BJ (cell line): ENCODE measurements at regions of chr10 and their contacts with region 1.

Region 1: DNA sequence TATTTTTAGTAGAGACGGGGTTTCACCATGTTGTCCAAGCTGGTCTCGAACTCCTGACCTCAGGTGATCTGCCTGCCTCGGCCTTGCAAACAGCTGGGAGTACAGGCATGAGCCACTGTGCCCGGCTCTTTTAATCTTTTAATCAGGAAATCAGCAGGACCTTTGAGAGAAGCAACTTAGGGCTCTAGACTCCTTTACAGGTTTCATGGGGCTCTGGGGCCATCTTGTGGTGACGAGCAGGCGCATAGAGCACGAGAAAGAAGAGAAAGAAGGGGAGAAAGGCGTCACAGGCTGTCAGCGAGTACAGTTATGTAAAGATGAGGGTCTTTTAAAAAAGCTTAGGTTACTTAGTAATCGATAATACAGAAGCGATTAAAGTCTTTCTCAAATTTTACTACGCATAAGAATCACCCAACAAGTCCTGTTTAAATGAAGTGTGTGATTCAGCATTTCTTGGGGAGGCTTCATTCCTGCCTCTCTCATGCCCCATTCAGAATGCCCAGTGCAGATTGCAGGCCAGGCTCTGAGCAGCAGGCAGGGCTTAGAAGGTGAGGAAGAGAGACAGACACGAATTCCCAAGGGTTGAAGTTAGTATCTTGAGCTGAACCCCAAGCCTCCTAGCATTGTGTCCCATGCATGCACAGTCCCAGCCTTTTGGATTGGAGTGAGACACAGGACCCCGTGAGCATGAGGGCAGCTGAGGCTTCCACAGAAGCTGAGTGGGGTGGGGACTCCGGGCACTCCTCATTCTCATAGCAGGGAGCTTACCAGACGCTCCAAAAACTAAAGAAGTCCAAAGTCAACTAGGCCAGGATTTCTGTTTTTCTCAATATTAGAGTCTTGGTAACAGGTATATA is 23.6 kb upstream of the PFKP start:
- DNase-seq: no peak
- H3K4me3 ChIP-seq: no peak overlapping the region
- H3K27me3 ChIP-seq: 0 out of 2 replicates have a peak, but pooled peaks cover under 1% of the 10 kb centered on the region
- CTCF ChIP-seq: peak; percentile 86

Region 2: GRCh38 chr10:2700626-2701305 is 343.0 kb before region 1 on chr10:
- CTCF ChIA-PET with region 1: no interaction called
- POLR2A ChIA-PET with region 1: no interaction called
- DNase-seq: no peak
- H3K4me3 ChIP-seq: no peak overlapping the region
- H3K27me3 ChIP-seq: no peaks in the 10 kb centered on the region
- CTCF ChIP-seq: no peak

Region 3: DNA sequence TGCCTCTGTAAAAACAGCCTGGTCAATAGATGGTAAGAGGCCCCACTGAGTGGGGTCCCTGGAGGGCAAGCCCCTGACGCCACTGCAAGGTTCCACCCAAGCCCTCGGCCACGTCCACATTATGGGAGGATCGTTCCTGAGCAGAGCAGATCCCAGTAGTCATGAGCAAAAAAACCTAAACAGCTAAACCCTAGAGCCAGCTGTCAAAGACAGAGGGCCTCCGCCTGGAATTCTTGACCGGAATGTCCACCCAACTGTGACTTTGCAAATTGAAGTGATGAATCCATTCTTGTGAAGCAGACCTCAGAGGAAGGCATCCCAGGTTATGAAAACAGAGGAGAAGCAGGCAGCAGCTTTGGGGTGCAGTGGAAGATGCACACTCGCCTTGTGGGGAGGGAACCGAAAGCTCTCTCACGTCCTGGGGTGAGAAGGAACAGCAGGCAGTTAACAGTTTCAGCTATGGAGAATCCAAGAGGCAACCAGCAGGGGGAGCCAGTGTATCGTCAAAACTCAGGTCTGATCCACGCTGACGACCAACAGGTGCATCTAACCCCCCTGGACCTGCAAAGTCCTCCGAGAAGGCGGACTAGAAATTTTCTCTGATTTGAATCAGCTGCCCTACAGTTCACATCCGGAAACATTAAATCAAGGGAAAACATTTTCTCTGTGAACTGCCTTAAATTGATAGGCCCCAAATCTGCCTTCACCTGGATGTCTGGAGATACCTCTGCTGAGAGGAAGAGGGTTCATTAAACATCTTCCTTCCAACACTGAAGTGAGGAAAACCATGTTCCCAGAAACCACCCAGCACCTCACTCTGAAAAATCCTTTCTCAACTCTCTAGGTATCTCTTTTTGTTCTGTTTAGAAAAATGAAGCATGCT is 115.5 kb before region 1 on chr10:
- CTCF ChIA-PET with region 1: interaction called, 143 read pairs
- POLR2A ChIA-PET with region 1: no interaction called
- DNase-seq: no peak
- H3K4me3 ChIP-seq: no peak overlapping the region
- H3K27me3 ChIP-seq: peaks cover 12% of the 10 kb centered on the region
- CTCF ChIP-seq: peak; percentile 81

Region 4: DNA sequence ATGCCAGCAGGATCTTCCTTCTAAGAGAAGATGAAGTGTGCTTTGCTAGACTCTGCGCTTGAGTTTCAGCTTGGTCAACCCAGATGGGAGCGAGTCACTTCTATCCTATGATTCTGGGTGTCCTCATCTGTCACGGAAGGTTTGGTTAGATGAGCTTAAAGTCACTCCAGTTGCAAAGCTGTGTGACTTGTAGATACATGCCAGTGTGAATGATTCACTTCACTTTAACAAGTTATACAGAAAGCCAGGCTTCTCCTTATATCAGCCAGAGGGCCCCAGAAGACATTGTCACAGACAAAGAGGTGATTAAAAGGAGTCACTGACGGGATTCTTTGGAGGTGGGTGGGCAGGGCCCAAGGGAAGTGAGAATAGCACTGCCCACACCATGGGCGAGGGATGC is 99.0 kb before region 1 on chr10:
- CTCF ChIA-PET with region 1: interaction called, 10 read pairs
- POLR2A ChIA-PET with region 1: no interaction called
- DNase-seq: no peak
- H3K4me3 ChIP-seq: no peak overlapping the region
- H3K27me3 ChIP-seq: peaks cover 5% of the 10 kb centered on the region; the same call in 1 of the 2 replicates
- CTCF ChIP-seq: no peak

Region 5: GRCh38 chr10:3022027-3022426 is 21.7 kb before region 1 on chr10:
- CTCF ChIA-PET with region 1: interaction called, 12 read pairs
- POLR2A ChIA-PET with region 1: no interaction called
- DNase-seq: no peak
- H3K4me3 ChIP-seq: no peak overlapping the region
- H3K27me3 ChIP-seq: peaks cover 4% of the 10 kb centered on the region; the same call in 1 of the 2 replicates
- CTCF ChIP-seq: no peak

Region 6: GRCh38 chr10:3126741-3127361 is 83.1 kb after region 1 on chr10:
- CTCF ChIA-PET with region 1: no interaction called
- POLR2A ChIA-PET with region 1: no interaction called
- DNase-seq: no peak
- H3K4me3 ChIP-seq: no peak overlapping the region
- H3K27me3 ChIP-seq: no peaks in the 10 kb centered on the region
- CTCF ChIP-seq: no peak

Region 7: GRCh38 chr10:3372281-3372680 is 328.5 kb after region 1 on chr10:
- CTCF ChIA-PET with region 1: no interaction called
- POLR2A ChIA-PET with region 1: no interaction called
- DNase-seq: no peak
- H3K4me3 ChIP-seq: no peak overlapping the region
- H3K27me3 ChIP-seq: peaks cover 1% of the 10 kb centered on the region; the same call in 1 of the 2 replicates
- CTCF ChIP-seq: no peak